H1 (cell line): ENCODE measurements at regions of chr12 and their contacts with region 1.

Region 1: DNA sequence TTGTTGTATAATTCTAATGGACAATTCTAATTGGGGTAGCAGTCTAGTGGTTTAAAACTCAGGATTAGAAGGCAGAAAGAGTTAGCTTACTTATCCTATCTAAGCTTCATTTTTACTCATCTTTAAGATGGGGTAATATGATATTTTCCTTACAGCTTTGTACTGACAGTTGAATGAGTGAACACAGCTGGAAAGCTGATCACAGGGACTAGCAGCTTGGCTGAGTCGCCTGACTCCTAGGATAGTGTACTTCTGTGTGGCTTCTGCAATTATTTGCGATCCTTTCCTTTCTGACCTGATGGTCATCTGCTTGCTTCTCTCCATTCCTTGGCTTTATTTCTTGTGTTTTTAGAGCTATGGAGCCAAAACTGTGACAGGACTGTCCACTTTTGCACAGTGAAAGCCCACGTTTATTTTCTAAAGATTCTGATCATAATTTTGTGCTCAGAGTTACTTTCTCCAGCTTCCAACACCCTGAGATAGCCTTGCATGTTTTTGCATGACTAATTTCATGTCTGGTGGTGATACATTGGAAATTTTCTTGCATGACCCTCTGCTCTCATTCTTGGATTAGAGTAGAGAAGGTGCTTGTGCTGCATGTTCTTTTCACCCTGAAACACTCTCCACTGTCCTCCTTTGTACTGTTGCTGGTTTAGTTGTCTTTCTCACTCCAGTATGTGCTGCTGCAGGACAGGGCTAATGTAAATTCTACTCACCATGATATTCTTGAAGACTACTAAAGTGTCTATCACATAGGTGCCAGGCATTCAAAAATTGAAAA is 377.0 kb upstream of the ATP2B1 start:
- DNase-seq: no peak
- H3K4me3 ChIP-seq: no peak overlapping the region
- H3K27ac ChIP-seq: no peak overlapping the region
- H3K4me1 ChIP-seq: no peaks in the 10 kb centered on the region
- H3K27me3 ChIP-seq: no peaks in the 10 kb centered on the region
- CTCF ChIP-seq: no peak
- EP300 ChIP-seq: no peak
- POLR2A ChIP-seq: no peak
- RAD21 ChIP-seq: no peak

Region 2: GRCh38 chr12:90064852-90065801 is 20.6 kb before region 1 on chr12:
- CTCF ChIA-PET with region 1: no interaction called
- POLR2A ChIA-PET with region 1: no interaction called
- DNase-seq: no peak
- H3K4me3 ChIP-seq: no peak overlapping the region
- H3K27ac ChIP-seq: no peak overlapping the region
- H3K4me1 ChIP-seq: no peaks in the 10 kb centered on the region
- H3K27me3 ChIP-seq: no peaks in the 10 kb centered on the region
- CTCF ChIP-seq: no peak
- EP300 ChIP-seq: no peak
- POLR2A ChIP-seq: no peak
- RAD21 ChIP-seq: no peak

Region 3: GRCh38 chr12:90102957-90103652 is 17.4 kb after region 1 on chr12:
- CTCF ChIA-PET with region 1: interaction called, 12 read pairs
- POLR2A ChIA-PET with region 1: no interaction called
- DNase-seq: no peak
- H3K4me3 ChIP-seq: no peak overlapping the region
- H3K27ac ChIP-seq: no peak overlapping the region
- H3K4me1 ChIP-seq: no peaks in the 10 kb centered on the region
- H3K27me3 ChIP-seq: no peaks in the 10 kb centered on the region
- CTCF ChIP-seq: peak in 2 of 3 experiments; percentile 36 to 65; a peak in 2 of 4 replicates
- EP300 ChIP-seq: no peak
- POLR2A ChIP-seq: no peak
- RAD21 ChIP-seq: peak; percentile 56 to 58